Activated CD4-positive, alpha-beta memory T cell treated with anti-CD3 and anti-CD28 coated beads, Interleukin-2, amount 10 ng/mL, durations not matched to agents 7 days and 5 days (primary cell): ENCODE measurements at regions of chr20 and their contacts with region 1.

Region 1: GRCh38 chr20:41136680-41137613 is at the start of gene PLCG1:
- DNase-seq: peak; percentile 86
- H3K4me3 Mint-ChIP-seq: peak within 1 kb of the TSS; percentile 86
- H3K27ac Mint-ChIP-seq: peak within 1 kb of the TSS; percentile 90
- H3K4me1 Mint-ChIP-seq: peaks cover 57% of the 10 kb centered on the region
- H3K27me3 Mint-ChIP-seq: no peaks in the 10 kb centered on the region
- total RNA-seq, gene PLCG1: 267 to 286 TPM

Region 2: DNA sequence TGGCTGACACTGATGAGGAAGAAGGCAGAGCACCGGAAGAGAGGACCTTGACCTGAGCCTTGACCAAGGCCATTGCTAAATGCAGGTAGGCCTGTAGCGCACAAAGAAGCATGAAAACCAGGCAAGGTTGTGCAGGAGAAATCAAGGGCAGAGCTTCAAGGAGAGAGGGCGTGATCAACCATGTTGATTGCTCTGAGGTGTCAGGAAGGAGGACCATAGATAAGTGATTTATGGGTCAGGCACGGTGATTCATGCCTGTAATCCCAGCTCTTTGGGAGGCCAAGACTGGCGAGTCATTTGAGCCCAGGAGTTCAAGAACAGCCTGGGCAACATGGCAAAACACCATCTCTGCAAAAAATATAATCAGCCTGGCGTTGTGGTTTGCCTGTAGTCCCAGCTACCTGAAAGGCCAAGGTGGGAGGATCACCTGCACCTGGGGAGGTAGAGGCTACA is 12.8 kb after region 1 on chr20:
- CTCF ChIA-PET with region 1: interaction called, 72 read pairs
- POLR2A ChIA-PET with region 1: interaction called, 466 read pairs
- DNase-seq: no peak
- H3K4me3 Mint-ChIP-seq: no peak overlapping the region
- H3K27ac Mint-ChIP-seq: peak overlapping the region; percentile 33
- H3K4me1 Mint-ChIP-seq: peaks cover 97% of the 10 kb centered on the region
- H3K27me3 Mint-ChIP-seq: no peaks in the 10 kb centered on the region

Region 3: GRCh38 chr20:41167481-41168253 is 30.7 kb after region 1 on chr20:
- CTCF ChIA-PET with region 1: interaction called, 26 read pairs
- POLR2A ChIA-PET with region 1: interaction called, 466 read pairs
- DNase-seq: no peak
- H3K4me3 Mint-ChIP-seq: no peak overlapping the region
- H3K27ac Mint-ChIP-seq: peak overlapping the region; percentile 38
- H3K4me1 Mint-ChIP-seq: peaks cover 35% of the 10 kb centered on the region
- H3K27me3 Mint-ChIP-seq: no peaks in the 10 kb centered on the region

Region 4: GRCh38 chr20:41232973-41233926 is 96.3 kb after region 1 on chr20:
- CTCF ChIA-PET with region 1: interaction called, 84 read pairs
- POLR2A ChIA-PET with region 1: interaction called, 9 read pairs
- DNase-seq: no peak
- H3K4me3 Mint-ChIP-seq: no peak overlapping the region
- H3K27ac Mint-ChIP-seq: no peak overlapping the region
- H3K4me1 Mint-ChIP-seq: peaks cover 24% of the 10 kb centered on the region
- H3K27me3 Mint-ChIP-seq: no peaks in the 10 kb centered on the region

Region 5: DNA sequence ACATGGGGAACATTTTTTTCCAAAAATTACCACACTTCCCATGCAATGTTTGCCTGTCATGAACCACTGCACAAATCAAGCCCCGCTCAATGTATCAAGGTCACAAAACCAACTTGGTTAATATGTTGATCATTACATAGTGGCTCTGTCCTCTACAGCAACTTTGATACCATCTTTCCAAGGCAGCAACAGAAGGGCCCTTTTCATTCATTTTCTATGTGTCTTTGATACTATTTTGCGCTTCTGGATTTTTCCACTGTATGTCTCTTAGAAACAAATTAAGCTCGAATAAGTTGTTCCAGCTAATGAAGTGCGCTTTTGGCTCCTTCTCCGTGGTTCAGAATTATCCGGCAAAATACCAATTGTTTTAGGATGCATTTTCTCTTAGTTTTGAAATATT is 179.1 kb after region 1 on chr20:
- CTCF ChIA-PET with region 1: no interaction called
- POLR2A ChIA-PET with region 1: no interaction called
- DNase-seq: no peak
- H3K4me3 Mint-ChIP-seq: peak overlapping the region; percentile 78
- H3K27ac Mint-ChIP-seq: no peak overlapping the region
- H3K4me1 Mint-ChIP-seq: peaks cover 28% of the 10 kb centered on the region
- H3K27me3 Mint-ChIP-seq: peaks cover 4% of the 10 kb centered on the region